ENCODE measurements at regions of chr9 and their contacts with region 1.

Region 1: DNA sequence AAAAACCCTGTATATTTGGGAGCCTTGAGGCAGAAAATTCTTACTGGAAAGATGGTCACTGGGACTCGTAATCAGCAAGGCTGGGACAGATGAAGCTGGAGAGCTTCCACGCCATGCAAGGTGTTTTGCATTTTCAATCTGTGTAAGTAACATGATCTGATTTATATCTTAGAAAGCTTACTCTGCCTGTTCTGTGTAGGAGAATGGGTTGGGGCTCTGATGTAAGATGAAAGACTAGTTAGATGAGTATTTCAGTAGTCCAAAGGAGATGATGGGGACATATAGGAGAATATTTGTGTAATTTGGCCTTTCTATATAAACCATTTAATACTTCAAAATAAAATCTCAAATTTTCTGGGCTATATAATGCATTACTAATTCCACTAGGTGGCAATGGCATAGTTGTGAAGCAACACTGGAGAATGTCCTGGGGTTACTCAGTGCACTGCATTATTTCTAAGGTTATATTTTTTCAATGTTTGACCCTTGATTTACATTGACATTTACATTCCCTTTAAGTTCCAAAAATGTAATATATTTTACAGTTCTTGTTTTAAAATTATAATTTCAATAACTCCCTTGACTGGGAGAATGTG is 21.9 kb upstream of the FSD1L start:
- DNase-seq: no peak
- ATAC-seq: peak; percentile 70 to 78
- H3K4me3 ChIP-seq: no peak overlapping the region
- H3K27ac ChIP-seq: no peak overlapping the region
- H3K4me1 ChIP-seq: no peaks in the 10 kb centered on the region
- H3K27me3 ChIP-seq: no peaks in the 10 kb centered on the region
- CTCF ChIP-seq: peak; percentile 34 to 70 (median 63)
- POLR2A ChIP-seq: no peak

Region 2: GRCh38 chr9:105475302-105475701 is 49.4 kb after region 1 on chr9:
- in situ Hi-C with region 1: loop called in 3 of 4 experiments (anchors 5 to 10 kb)
- intact Hi-C with region 1: loop called (anchors 2 kb)
- DNase-seq: no peak
- ATAC-seq: peak; percentile 68 to 77
- H3K4me3 ChIP-seq: no peak overlapping the region
- H3K27ac ChIP-seq: no peak overlapping the region
- H3K4me1 ChIP-seq: no peaks in the 10 kb centered on the region
- H3K27me3 ChIP-seq: no peaks in the 10 kb centered on the region
- CTCF ChIP-seq: peak in 4 of 5 experiments; percentile 27 to 44 (median 36)
- POLR2A ChIP-seq: no peak

Region 3: GRCh38 chr9:105662193-105663075 is 236.5 kb after region 1 on chr9 and contains the start of gene TAL2:
- in situ Hi-C with region 1: no loop called
- intact Hi-C with region 1: no loop called
- DNase-seq: no peak
- ATAC-seq: peak in 1 of 2 donors; percentile 32
- H3K4me3 ChIP-seq: no peak within 1 kb of the TSS
- H3K27ac ChIP-seq: peak within 1 kb of the TSS; percentile 21 to 77 (median 54)
- H3K4me1 ChIP-seq: peaks cover 5 to 14% of the 10 kb centered on the region in 2 donors
- H3K27me3 ChIP-seq: no peaks in the 10 kb centered on the region
- CTCF ChIP-seq: no peak
- POLR2A ChIP-seq: no peak
- total RNA-seq, gene TAL2: not detected

Measured in gastrocnemius medialis (tissue), 4 donors.